ENCODE measurements at regions of chr18 and their contacts with region 1.

Region 1: GRCh38 chr18:51197661-51198424 is at the start of gene MEX3C:
- DNase-seq: peak; percentile 100
- H3K4me3 ChIP-seq: peak within 1 kb of the TSS; percentile 89 to 90
- H3K27ac ChIP-seq: peak within 1 kb of the TSS; percentile 97 to 98
- H3K4me1 ChIP-seq: peaks cover 0 to 32% (median 24%) of the 10 kb centered on the region in 4 donors
- H3K27me3 ChIP-seq: no peaks in the 10 kb centered on the region
- CTCF ChIP-seq: peak in 1 of 2 experiments; percentile 31

Region 2: GRCh38 chr18:50287441-50288347 is 910.1 kb before region 1 on chr18 and contains the start of gene CXXC1:
- intact Hi-C with region 1: loop called (anchors 10 kb)
- DNase-seq: peak; percentile 97 to 98
- H3K4me3 ChIP-seq: peak within 1 kb of the TSS; percentile 70 to 91
- H3K27ac ChIP-seq: peak within 1 kb of the TSS; percentile 90 to 91
- H3K4me1 ChIP-seq: peaks cover 0 to 9% (median 7%) of the 10 kb centered on the region in 4 donors
- H3K27me3 ChIP-seq: peaks cover 0 to 7% of the 10 kb centered on the region in 2 donors
- CTCF ChIP-seq: peak; percentile 44 to 63

Region 3: DNA sequence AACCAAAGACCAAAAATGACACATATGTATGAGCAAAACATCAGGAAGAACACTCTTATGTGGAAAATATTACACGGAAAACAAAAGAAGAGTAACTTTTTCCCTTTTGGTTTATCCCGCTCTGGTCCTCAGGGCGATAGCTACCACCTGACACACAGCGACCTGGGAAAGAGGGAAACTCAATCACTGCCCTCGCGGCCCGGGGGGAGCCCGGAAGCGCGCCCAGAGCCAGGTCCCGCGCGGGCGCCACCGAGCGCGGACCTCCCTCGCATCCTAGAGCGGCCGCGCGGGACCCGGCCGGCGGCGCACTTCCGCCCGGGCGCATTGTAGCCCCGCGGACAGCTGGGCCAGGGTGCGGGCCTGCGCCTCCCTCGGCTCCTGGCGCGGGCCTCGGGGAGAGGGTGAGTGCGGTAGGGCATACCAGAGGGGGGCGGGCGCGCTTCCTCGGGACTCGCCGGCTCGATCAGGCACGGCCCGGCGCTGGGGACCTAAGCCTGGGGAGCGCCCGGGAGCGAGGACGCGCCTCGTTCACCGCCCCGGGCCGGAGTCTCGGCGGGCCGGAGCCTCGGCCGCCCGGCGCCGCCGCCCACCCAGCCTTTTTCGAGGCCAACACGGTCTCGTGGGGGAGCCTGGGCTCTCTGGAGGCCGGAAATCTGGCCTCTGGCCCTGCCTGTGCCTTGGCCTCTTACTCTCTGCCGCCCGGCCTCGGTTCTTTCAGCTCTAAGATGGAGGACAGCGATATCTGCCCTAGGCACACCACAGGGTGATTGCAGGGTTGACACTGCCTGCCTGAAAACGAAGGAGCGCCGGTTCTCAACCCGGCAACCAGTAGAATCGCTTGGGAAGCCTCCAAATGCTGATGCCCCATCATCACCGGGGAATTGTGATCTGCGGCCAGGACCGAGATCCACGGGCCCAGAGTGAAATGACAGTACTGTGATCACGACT is 229.9 kb before region 1 on chr18 and contains the start of gene ELAC1:
- intact Hi-C with region 1: loop called (anchors 10 kb)
- DNase-seq: peak; percentile 59 to 84
- H3K4me3 ChIP-seq: peak within 1 kb of the TSS; percentile 94 to 96
- H3K27ac ChIP-seq: peak within 1 kb of the TSS; percentile 99
- H3K4me1 ChIP-seq: peaks cover 0 to 22% (median 11%) of the 10 kb centered on the region in 4 donors
- H3K27me3 ChIP-seq: no peaks in the 10 kb centered on the region
- CTCF ChIP-seq: no peak

Region 4: GRCh38 chr18:51068105-51068504 is 129.7 kb before region 1 on chr18:
- intact Hi-C with region 1: loop called (anchors 10 kb)
- DNase-seq: no peak
- H3K4me3 ChIP-seq: no peak overlapping the region
- H3K27ac ChIP-seq: no peak overlapping the region
- H3K4me1 ChIP-seq: peaks cover 0 to 30% (median 3%) of the 10 kb centered on the region in 4 donors
- H3K27me3 ChIP-seq: no peaks in the 10 kb centered on the region
- CTCF ChIP-seq: no peak